Colonic mucosa (tissue), 4 donors: ENCODE measurements at regions of chr4 and their contacts with region 1.

Region 1: GRCh38 chr4:16289897-16290554 is 63.8 kb upstream of the TAPT1 start:
- DNase-seq: no peak
- H3K4me3 ChIP-seq: no peak overlapping the region
- H3K27ac ChIP-seq: no peak overlapping the region
- H3K4me1 ChIP-seq: no peaks in the 10 kb centered on the region
- H3K27me3 ChIP-seq: no peaks in the 10 kb centered on the region
- CTCF ChIP-seq: peak; percentile 41

Region 2: GRCh38 chr4:16443504-16444088 is 153.6 kb after region 1 on chr4:
- intact Hi-C with region 1: loop called (anchors 2 kb)
- DNase-seq: peak; percentile 17
- H3K4me3 ChIP-seq: no peak overlapping the region
- H3K27ac ChIP-seq: no peak overlapping the region
- H3K4me1 ChIP-seq: no peaks in the 10 kb centered on the region
- H3K27me3 ChIP-seq: no peaks in the 10 kb centered on the region
- CTCF ChIP-seq: peak; percentile 49

Region 3: GRCh38 chr4:17324386-17324830 is 1034.4 kb after region 1 on chr4:
- intact Hi-C with region 1: loop called (anchors 5 kb)
- DNase-seq: peak; percentile 30
- H3K4me3 ChIP-seq: no peak overlapping the region
- H3K27ac ChIP-seq: no peak overlapping the region
- H3K4me1 ChIP-seq: no peaks in the 10 kb centered on the region
- H3K27me3 ChIP-seq: no peaks in the 10 kb centered on the region
- CTCF ChIP-seq: peak; percentile 28

Region 4: GRCh38 chr4:17447675-17448298 is 1157.8 kb after region 1 on chr4:
- intact Hi-C with region 1: loop called (anchors 10 kb)
- DNase-seq: peak; percentile 57
- H3K4me3 ChIP-seq: no peak overlapping the region
- H3K27ac ChIP-seq: no peak overlapping the region
- H3K4me1 ChIP-seq: no peaks in the 10 kb centered on the region
- H3K27me3 ChIP-seq: no peaks in the 10 kb centered on the region
- CTCF ChIP-seq: peak; percentile 65

Region 5: DNA sequence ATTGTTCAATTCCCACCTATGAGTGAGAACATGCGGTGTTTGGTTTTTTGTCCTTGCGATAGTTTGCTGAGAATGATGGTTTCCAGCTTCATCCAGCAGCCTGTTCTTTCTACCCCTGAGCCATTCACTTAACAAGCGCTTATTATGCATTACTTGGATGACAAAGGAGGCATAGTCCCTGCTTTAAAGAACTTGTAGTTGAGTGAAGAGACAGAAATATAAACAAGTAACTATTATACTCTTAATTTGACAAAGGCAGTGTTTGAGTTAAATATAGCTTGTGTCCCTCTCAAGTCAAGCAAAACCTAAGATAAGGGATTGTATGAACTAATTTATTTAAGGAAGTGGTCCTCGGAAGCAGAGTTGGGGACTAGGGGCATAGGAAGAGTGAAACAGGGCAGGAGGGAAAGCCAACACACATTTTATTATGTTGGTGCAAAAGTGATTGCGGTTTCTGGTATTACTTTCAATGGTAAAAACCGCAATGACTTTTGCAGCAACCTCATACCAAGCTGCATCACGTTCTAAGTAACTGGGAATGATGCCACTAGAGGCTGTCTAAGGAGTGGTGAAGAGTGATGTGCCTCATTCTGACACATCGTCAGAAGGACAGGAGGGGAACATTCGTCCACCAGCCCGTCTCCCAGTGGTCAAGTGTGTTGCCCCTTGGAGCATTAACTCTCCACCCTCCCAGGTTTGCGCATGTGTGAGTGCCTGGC is 1180.1 kb after region 1 on chr4:
- intact Hi-C with region 1: loop called (anchors 5 kb)
- DNase-seq: no peak
- H3K4me3 ChIP-seq: no peak overlapping the region
- H3K27ac ChIP-seq: no peak overlapping the region
- H3K4me1 ChIP-seq: no peaks in the 10 kb centered on the region
- H3K27me3 ChIP-seq: no peaks in the 10 kb centered on the region
- CTCF ChIP-seq: no peak